Activated CD8-positive, alpha-beta T cell treated with anti-CD3 and anti-CD28 coated beads for 36 hours (primary cell): ENCODE measurements at regions of chr5 and their contacts with region 1.

Region 1: GRCh38 chr5:81513982-81514381 is 120.0 kb upstream of the ACOT12 start:
- DNase-seq: no peak
- ATAC-seq: no peak
- H3K4me3 Mint-ChIP-seq: no peak overlapping the region
- H3K27ac Mint-ChIP-seq: no peak overlapping the region
- H3K4me1 Mint-ChIP-seq: no peaks in the 10 kb centered on the region
- H3K27me3 Mint-ChIP-seq: no peaks in the 10 kb centered on the region
- CTCF ChIP-seq: peak; percentile 40

Region 2: GRCh38 chr5:81315336-81315735 is 198.6 kb before region 1 on chr5:
- CTCF ChIA-PET with region 1: no interaction called
- POLR2A ChIA-PET with region 1: no interaction called
- intact Hi-C with region 1: no loop called
- DNase-seq: no peak
- ATAC-seq: no peak
- H3K4me3 Mint-ChIP-seq: no peak overlapping the region
- H3K27ac Mint-ChIP-seq: no peak overlapping the region
- H3K4me1 Mint-ChIP-seq: no peaks in the 10 kb centered on the region
- H3K27me3 Mint-ChIP-seq: no peaks in the 10 kb centered on the region
- CTCF ChIP-seq: no peak

Region 3: DNA sequence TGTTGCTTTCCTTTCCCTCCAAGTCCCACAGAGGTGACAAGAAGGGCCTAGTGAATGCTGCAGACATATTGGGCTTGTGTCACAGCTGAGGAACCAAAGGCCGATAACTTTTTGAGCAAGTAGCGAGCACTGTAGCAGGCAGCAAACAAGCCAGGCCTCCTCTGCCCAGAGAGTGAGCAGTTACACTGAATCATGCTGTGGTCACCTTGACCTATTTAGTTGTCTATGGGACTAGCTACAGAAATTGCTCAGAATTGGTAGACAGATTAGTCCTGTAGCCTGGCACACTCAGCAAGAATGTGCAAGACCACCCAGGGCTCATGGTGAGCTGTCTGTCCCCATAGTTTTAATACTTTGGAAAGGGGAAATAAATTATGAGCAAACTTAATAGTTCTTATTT is 187.4 kb before region 1 on chr5:
- CTCF ChIA-PET with region 1: no interaction called
- POLR2A ChIA-PET with region 1: no interaction called
- intact Hi-C with region 1: no loop called
- DNase-seq: no peak
- ATAC-seq: no peak
- H3K4me3 Mint-ChIP-seq: no peak overlapping the region
- H3K27ac Mint-ChIP-seq: no peak overlapping the region
- H3K4me1 Mint-ChIP-seq: no peaks in the 10 kb centered on the region
- H3K27me3 Mint-ChIP-seq: no peaks in the 10 kb centered on the region
- CTCF ChIP-seq: no peak

Region 4: DNA sequence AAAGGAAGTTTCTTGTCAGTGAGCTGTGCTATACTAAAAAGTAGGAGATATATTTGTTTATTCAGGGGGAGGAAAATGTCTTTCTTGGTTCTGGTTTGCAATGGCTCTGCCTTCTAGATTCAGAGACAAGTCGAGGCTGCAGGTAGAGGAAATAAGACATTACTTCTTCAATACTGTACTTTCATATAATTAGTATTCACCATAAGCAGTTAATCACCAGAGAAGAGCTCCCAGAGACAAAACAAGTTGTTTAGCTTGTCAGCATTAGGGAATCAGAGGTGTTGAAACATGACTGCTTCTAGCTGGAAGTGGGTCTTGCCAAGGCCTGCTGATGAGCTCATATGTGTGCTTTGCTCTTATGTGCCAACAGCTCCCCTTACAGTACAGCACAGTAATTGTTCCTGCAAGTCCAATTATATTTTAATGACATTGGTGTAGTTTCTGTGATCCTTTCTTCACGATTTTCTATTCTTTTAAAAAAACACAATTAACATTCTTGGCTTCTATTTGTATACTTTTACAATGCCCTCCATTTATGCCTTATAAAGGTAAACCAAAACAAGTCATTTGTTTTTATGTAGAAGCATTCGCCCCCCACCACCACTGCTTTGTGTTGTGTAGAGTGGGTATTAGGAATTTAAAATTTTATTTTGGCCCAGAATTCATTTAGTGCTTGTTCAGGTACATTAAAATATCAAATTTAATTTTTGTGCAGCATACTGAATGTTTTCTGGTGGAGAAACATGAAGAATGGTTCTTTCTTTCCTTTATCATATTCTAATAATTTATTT is 652.0 kb after region 1 on chr5:
- CTCF ChIA-PET with region 1: interaction called, 10 read pairs
- POLR2A ChIA-PET with region 1: no interaction called
- intact Hi-C with region 1: loop called (anchors 10 kb)
- DNase-seq: peak; percentile 47
- ATAC-seq: peak; percentile 95
- H3K4me3 Mint-ChIP-seq: no peak overlapping the region
- H3K27ac Mint-ChIP-seq: no peak overlapping the region
- H3K4me1 Mint-ChIP-seq: peaks cover 8% of the 10 kb centered on the region
- H3K27me3 Mint-ChIP-seq: no peaks in the 10 kb centered on the region
- CTCF ChIP-seq: peak; percentile 62